ENCODE measurements at regions of chr17 and their contacts with region 1.

Region 1: GRCh38 chr17:78341559-78342448 is 18.1 kb downstream of the SOCS3 start:
- DNase-seq: peak; percentile 84 to 86
- ATAC-seq: peak; percentile 64 to 86 (median 75)
- H3K4me3 ChIP-seq: peak overlapping the region in 9 of 10 donors; percentile 20 to 59 (median 49)
- H3K27ac ChIP-seq: peak overlapping the region; percentile 67 to 99 (median 96)
- H3K4me1 ChIP-seq: peaks cover 17 to 93% (median 45%) of the 10 kb centered on the region in 9 donors
- H3K27me3 ChIP-seq: no peaks in the 10 kb centered on the region
- CTCF ChIP-seq: peak in 4 of 9 donors; percentile 6 to 39 (median 28)

Region 2: DNA sequence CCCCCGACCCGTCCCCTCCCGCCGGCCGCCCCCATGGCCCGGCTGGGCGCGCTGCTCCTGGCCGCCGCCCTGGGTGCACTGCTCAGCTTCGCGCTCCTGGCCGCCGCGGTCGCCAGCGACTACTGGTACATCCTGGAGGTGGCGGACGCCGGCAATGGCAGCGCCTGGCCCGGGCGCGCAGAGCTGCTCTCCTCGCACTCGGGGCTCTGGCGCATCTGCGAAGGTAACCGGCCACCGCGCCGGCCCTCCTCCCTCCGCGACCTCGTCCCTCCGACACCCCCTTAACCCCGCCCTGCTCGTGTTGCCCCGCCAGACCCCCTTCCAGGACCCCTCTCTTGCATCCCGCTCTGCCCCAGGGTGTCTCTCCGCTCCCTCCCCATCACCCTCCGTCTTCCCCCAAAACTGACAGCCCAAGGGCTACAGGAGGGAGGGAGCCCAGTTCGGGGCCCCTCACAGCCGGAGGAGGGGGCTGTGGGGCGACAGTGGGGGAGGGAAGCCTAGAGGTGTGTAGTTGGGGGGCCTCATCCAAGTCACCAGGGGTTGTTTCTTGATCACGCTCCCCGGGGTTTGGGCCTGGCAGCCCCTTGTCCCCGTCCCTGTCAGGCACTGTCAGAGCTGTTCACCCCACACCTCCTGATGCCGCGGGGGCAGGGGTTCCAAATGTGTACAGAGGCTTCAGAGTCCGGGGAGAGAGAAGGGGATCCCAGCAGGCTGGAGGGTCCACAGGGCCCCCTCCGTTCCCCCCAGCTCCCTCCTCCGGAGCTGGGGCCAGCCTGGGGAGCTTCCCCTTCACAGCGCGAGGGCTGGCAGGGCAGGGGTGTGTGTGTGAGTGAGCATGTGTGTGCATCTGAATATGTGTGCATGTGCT is 109.6 kb before region 1 on chr17:
- intact Hi-C with region 1: no loop called
- DNase-seq: no peak
- ATAC-seq: no peak
- H3K4me3 ChIP-seq: no peak overlapping the region
- H3K27ac ChIP-seq: no peak overlapping the region
- H3K4me1 ChIP-seq: peaks cover 0 to 22% (median 5%) of the 10 kb centered on the region in 9 donors
- H3K27me3 ChIP-seq: peaks cover 18 to 41% (median 37%) of the 10 kb centered on the region in 7 donors
- CTCF ChIP-seq: no peak

Region 3: DNA sequence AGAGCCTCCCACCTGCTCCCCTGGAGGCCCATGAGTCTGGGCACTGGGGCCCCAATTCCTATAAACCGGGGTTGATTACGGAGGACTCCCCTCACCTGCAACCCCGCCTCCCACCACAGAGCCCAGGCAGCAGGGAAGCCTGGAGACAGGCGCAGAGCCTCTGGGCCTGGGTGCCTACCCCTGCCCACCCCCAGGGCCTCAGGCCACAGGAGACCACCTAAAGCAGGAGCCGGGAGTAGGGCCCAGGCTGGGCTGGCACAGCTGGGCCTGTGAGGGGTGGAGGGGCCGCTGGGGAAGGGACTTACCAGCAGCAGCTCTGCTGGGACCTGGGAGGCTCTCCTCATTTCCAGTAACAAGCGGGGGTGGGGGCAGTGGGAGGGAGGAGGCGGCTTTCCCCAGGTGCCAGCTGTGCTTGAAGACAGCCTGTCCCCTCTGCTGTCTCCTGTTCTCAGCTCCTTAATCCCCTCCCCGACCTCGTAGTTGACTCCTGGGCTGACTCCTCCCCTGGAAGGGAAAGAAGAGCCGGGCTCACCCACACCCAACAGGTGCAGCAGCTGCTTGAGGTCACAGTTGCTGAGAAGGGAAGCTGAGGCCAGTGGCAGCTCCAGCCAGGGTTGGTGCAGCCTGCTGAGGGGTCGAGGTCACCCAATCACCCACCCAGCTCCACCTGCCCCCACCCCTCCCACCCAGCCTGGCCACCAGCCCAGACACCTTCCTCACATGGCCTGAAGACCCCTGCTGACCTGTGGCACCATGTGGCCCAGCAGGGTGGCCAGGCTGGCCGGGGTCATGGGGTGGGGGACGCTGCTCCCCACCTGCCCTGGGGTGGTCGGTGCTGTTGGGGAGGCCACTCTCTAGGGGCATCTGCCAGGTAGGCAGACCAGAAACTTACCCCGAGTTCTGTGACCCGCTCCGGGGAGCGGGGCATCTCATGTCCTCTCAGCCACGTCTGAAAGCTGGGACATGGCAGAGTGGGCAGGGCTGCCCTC is 63.4 kb before region 1 on chr17:
- intact Hi-C with region 1: no loop called
- DNase-seq: no peak
- ATAC-seq: peak in 2 of 8 donors; percentile 21 to 29
- H3K4me3 ChIP-seq: no peak overlapping the region
- H3K27ac ChIP-seq: peak overlapping the region in 1 of 10 donors; percentile 31
- H3K4me1 ChIP-seq: peaks cover 0 to 4% (median 0%) of the 10 kb centered on the region in 9 donors
- H3K27me3 ChIP-seq: no peaks in the 10 kb centered on the region
- CTCF ChIP-seq: no peak

Region 4: GRCh38 chr17:78289802-78290363 is 51.9 kb before region 1 on chr17:
- intact Hi-C with region 1: loop called in 2 of 10 experiments (anchors 5 kb)
- DNase-seq: peak; percentile 71 to 85
- ATAC-seq: peak; percentile 84 to 95 (median 92)
- H3K4me3 ChIP-seq: no peak overlapping the region
- H3K27ac ChIP-seq: no peak overlapping the region
- H3K4me1 ChIP-seq: peaks cover 0 to 28% (median 8%) of the 10 kb centered on the region in 9 donors
- H3K27me3 ChIP-seq: no peaks in the 10 kb centered on the region
- CTCF ChIP-seq: peak; percentile 61 to 85 (median 76)

Region 5: GRCh38 chr17:78324391-78325075 is 17.3 kb before region 1 on chr17:
- intact Hi-C with region 1: loop called in 1 of 10 experiments (anchors 2 kb)
- DNase-seq: peak; percentile 89 to 96
- ATAC-seq: peak; percentile 73 to 92 (median 90)
- H3K4me3 ChIP-seq: peak overlapping the region in 4 of 10 donors; percentile 10 to 30 (median 20)
- H3K27ac ChIP-seq: peak overlapping the region; percentile 49 to 96 (median 90)
- H3K4me1 ChIP-seq: peaks cover 23 to 58% (median 41%) of the 10 kb centered on the region in 9 donors
- H3K27me3 ChIP-seq: no peaks in the 10 kb centered on the region
- CTCF ChIP-seq: no peak

Region 6: GRCh38 chr17:78674595-78675315 is 333.0 kb after region 1 on chr17:
- intact Hi-C with region 1: no loop called
- DNase-seq: no peak
- ATAC-seq: peak in 1 of 8 donors; percentile 9
- H3K4me3 ChIP-seq: no peak overlapping the region
- H3K27ac ChIP-seq: no peak overlapping the region
- H3K4me1 ChIP-seq: peaks cover 0 to 3% (median 0%) of the 10 kb centered on the region in 9 donors
- H3K27me3 ChIP-seq: no peaks in the 10 kb centered on the region
- CTCF ChIP-seq: no peak